ENCODE measurements at regions of chr15 and their contacts with region 1.

Region 1: GRCh38 chr15:41904541-41905005 is 10.7 kb upstream of the SPTBN5 start:
- DNase-seq: peak; percentile 15
- H3K4me3 ChIP-seq: no peak overlapping the region
- H3K27ac ChIP-seq: peak overlapping the region; percentile 11
- H3K27me3 ChIP-seq: no peaks in the 10 kb centered on the region
- CTCF ChIP-seq: peak; percentile 90

Region 2: DNA sequence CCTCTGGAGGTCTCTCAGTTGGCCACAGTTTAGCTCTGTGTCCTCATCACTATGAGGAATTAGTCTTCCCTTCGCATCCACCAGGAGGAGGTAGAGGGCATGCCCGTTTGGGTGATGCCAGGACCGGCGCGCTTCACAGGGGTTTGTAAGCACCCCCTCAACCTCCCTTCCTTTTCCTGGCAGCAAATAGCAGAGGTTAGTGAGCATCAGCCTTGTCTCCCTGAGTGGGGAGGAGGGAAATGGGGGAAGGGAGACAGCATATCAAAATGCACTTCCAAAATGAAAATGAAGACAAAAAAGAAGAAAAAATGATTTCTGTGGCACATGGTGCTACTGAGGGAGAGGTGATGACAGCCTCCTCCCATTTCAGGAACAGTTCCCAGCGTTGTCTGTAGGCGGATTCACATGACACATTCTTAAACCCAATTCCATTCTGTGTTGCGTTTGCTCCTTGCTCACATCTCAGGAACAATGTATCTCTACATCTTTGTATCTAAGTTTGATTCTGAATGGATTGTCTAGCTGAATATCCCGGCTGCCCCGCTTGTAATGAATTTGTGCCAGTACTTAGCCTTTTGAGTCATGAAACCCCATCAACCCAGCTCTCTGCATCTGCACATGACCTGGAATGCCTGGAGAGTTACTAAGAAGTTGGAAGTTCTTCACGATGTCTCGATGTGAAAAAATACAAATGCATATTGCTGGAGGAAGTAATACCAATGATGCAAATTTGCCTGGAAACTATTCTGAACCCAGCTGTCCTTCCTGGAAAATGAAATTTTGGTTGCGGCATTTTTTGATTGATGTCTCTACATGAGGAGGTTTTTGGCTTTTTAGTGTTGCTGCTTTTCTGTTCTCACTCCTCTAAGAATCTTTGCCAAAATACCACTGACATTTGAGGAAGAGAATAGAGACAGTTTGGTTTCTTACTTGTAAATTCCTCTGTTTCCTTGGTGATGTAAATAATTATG is 300.3 kb before region 1 on chr15:
- CTCF ChIA-PET with region 1: interaction called, 5 read pairs
- POLR2A ChIA-PET with region 1: interaction called, 12 read pairs
- DNase-seq: no peak
- H3K4me3 ChIP-seq: peak overlapping the region; percentile 52
- H3K27ac ChIP-seq: peak overlapping the region; percentile 78
- H3K27me3 ChIP-seq: no peaks in the 10 kb centered on the region
- CTCF ChIP-seq: peak; percentile 90

Region 3: GRCh38 chr15:41950489-41950888 is 45.9 kb after region 1 on chr15:
- CTCF ChIA-PET with region 1: interaction called, 10 read pairs
- POLR2A ChIA-PET with region 1: no interaction called
- DNase-seq: no peak
- H3K4me3 ChIP-seq: no peak overlapping the region
- H3K27ac ChIP-seq: peak overlapping the region; percentile 12
- H3K27me3 ChIP-seq: no peaks in the 10 kb centered on the region
- CTCF ChIP-seq: no peak